Activated T-helper 1 cell treated with anti-CD3 and anti-CD28 coated beads, Interleukin-12 subunit alpha, Interleukin-12 subunit beta, Interleukin-2, Interleukin-4 antibody, amounts not matched to agents 30 ng/mL and 10 ng/mL and 1 ng/mL, durations not matched to agents 14 hours and 24 hours and 36 hours (primary cell): ENCODE measurements at regions of chr6 and their contacts with region 1.

Region 1: DNA sequence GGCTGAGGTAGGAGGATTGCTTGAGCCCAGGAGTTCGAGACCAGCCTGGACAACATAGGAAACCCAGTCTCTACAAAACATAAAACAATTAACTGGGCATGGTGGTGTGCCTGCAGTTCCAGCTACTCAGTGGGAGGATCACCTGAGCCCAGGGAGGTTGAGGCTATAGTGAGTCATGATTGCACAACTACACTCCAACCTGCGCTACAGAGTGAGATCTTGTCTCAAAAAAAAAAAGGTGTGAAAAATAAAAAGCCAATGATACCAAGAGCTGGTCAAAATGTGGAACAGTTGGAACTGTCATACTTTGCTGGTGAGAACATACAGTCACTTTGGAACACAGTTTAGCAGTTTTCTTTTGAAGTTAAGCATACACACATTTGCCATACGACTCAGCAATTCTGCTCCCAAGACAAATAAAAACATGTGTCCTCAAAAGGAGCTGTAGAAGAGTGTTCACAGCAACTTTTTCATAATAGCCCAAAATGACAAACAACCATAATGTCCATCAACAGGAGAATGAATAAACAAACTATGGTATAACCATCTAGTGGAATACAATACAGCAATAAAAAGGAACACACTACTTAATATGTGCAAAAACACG is 21.6 kb upstream of the FKBP5 start:
- DNase-seq: no peak
- H3K4me3 Mint-ChIP-seq: peak overlapping the region; percentile 50
- H3K27ac Mint-ChIP-seq: peak overlapping the region; percentile 82
- H3K4me1 Mint-ChIP-seq: peaks cover 50% of the 10 kb centered on the region
- H3K27me3 Mint-ChIP-seq: no peaks in the 10 kb centered on the region

Region 2: DNA sequence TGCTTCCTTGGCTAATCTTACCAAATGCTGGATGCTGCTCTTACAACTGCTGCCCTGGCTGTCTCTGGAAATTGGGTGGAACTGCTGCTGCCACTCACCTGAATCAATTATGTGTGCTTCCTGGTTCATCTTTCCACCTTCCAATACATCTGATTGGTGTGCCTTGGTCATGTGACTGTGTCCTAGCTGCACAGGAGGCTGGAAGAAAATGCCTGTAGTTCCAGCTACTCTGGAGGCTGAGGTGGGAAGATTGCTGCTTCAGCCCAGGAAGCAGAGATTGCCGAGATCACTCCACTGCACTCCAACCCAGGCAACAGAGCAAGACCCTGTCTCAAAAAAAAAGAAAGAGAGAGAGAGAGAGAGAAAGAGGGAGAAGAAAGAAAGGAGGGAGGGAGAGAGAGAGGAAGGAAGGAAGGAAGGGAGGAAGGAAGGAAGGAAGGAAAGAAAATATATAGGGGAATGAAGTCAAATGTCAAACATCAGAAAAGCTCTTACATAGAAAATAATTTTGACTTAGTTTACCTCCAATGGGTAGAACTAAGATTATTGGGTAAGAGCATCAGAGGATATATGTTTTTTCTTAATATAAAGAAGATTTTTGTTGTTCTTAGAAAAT is 382.1 kb before region 1 on chr6:
- intact Hi-C with region 1: no loop called
- DNase-seq: no peak
- H3K4me3 Mint-ChIP-seq: no peak overlapping the region
- H3K27ac Mint-ChIP-seq: peak overlapping the region; percentile 15
- H3K4me1 Mint-ChIP-seq: peaks cover 16% of the 10 kb centered on the region
- H3K27me3 Mint-ChIP-seq: no peaks in the 10 kb centered on the region

Region 3: GRCh38 chr6:35601331-35602132 is 108.8 kb before region 1 on chr6:
- intact Hi-C with region 1: loop called (anchors 1 kb)
- DNase-seq: peak; percentile 57
- H3K4me3 Mint-ChIP-seq: peak overlapping the region; percentile 80
- H3K27ac Mint-ChIP-seq: peak overlapping the region; percentile 89
- H3K4me1 Mint-ChIP-seq: peaks cover 62% of the 10 kb centered on the region
- H3K27me3 Mint-ChIP-seq: no peaks in the 10 kb centered on the region